Activated CD8-positive, alpha-beta memory T cell treated with anti-CD3 and anti-CD28 coated beads, Interleukin-2, amount 10 ng/mL, durations not matched to agents 7 days and 5 days (primary cell): ENCODE measurements at regions of chr5 and their contacts with region 1.

Region 1: GRCh38 chr5:142769741-142770631 is at the start of gene ARHGAP26:
- DNase-seq: peak; percentile 97
- ATAC-seq: peak; percentile 94
- H3K4me3 Mint-ChIP-seq: peak within 1 kb of the TSS; percentile 89
- H3K27ac Mint-ChIP-seq: peak within 1 kb of the TSS; percentile 88
- H3K4me1 Mint-ChIP-seq: peaks cover 37% of the 10 kb centered on the region
- H3K27me3 Mint-ChIP-seq: no peaks in the 10 kb centered on the region
- total RNA-seq, gene ARHGAP26: 12.6 to 38.9 TPM

Region 2: GRCh38 chr5:142699184-142699720 is 70.7 kb before region 1 on chr5:
- CTCF ChIA-PET with region 1: no interaction called
- DNase-seq: peak; percentile 85
- ATAC-seq: peak; percentile 90
- H3K4me3 Mint-ChIP-seq: no peak overlapping the region
- H3K27ac Mint-ChIP-seq: no peak overlapping the region
- H3K4me1 Mint-ChIP-seq: no peaks in the 10 kb centered on the region
- H3K27me3 Mint-ChIP-seq: peaks cover 18% of the 10 kb centered on the region

Region 3: GRCh38 chr5:142783601-142784341 is 13.8 kb after region 1 on chr5:
- CTCF ChIA-PET with region 1: interaction called, 37 read pairs
- DNase-seq: peak; percentile 92
- ATAC-seq: peak; percentile 87
- H3K4me3 Mint-ChIP-seq: peak overlapping the region; percentile 70
- H3K27ac Mint-ChIP-seq: peak overlapping the region; percentile 86
- H3K4me1 Mint-ChIP-seq: peaks cover 75% of the 10 kb centered on the region
- H3K27me3 Mint-ChIP-seq: no peaks in the 10 kb centered on the region

Region 4: DNA sequence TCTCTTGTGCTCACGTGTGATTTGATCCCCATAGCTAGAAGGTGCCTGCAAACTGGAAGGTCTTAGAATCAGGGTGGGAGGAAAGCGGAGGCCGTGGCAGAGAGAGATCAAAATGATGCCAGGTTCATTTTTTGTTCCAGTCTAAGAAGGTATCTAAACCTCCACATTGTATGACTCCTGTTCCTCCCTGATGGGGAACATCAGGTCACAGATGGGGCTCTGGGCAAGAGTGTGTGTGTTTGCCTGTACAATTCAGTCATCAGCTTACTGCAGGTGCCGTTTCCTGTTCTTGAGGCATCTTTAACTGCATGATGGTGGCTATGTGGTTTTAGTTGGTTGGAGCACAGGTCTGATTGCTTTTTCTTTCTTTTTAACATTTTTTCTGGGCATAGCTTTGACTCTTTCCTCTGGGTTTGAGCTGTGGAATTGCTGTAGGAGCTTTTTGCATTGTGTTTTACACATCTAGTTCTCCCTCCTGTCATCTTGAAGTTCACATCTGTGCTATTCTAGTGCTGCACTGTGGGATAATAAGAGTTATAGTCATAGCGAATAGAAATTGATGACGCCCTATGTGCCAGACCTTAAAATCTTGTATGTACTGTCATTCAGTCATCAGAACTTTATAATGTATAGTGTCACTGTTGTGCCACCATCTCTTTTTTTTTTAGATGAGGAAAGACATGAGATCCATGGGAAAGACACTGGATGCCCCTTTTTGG is 30.9 kb after region 1 on chr5:
- CTCF ChIA-PET with region 1: interaction called, 25 read pairs
- DNase-seq: peak; percentile 81
- ATAC-seq: peak; percentile 85
- H3K4me3 Mint-ChIP-seq: peak overlapping the region; percentile 70
- H3K27ac Mint-ChIP-seq: peak overlapping the region; percentile 95
- H3K4me1 Mint-ChIP-seq: peaks cover 68% of the 10 kb centered on the region
- H3K27me3 Mint-ChIP-seq: no peaks in the 10 kb centered on the region

Region 5: GRCh38 chr5:142821733-142822487 is 51.9 kb after region 1 on chr5:
- CTCF ChIA-PET with region 1: interaction called, 10 read pairs
- DNase-seq: no peak
- ATAC-seq: peak; percentile 87
- H3K4me3 Mint-ChIP-seq: no peak overlapping the region
- H3K27ac Mint-ChIP-seq: peak overlapping the region; percentile 31
- H3K4me1 Mint-ChIP-seq: peaks cover 85% of the 10 kb centered on the region
- H3K27me3 Mint-ChIP-seq: no peaks in the 10 kb centered on the region

Region 6: DNA sequence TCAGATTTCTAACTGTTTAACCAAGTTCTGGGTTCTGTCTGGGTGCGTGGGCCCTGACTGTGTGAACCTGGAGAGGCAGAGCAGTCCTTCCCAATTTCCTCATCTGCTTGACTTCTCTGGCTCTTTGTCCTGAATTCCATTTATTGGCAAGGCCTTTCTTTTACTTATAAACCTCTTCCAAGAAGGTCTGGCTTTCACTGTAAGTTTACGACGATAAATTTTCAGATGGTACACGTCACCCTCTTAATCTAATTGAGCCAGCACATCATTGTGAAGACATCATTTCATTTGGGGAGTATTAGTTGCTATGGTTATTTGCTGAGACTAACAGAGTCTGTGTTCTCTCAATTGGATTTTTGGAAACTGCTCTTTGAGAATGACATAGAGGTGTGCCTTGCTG is 92.6 kb after region 1 on chr5:
- CTCF ChIA-PET with region 1: interaction called, 32 read pairs
- DNase-seq: no peak
- ATAC-seq: no peak
- H3K4me3 Mint-ChIP-seq: no peak overlapping the region
- H3K27ac Mint-ChIP-seq: no peak overlapping the region
- H3K4me1 Mint-ChIP-seq: peaks cover 21% of the 10 kb centered on the region
- H3K27me3 Mint-ChIP-seq: no peaks in the 10 kb centered on the region

Region 7: GRCh38 chr5:142881076-142881783 is 111.2 kb after region 1 on chr5:
- CTCF ChIA-PET with region 1: interaction called, 16 read pairs
- DNase-seq: no peak
- ATAC-seq: peak; percentile 16
- H3K4me3 Mint-ChIP-seq: no peak overlapping the region
- H3K27ac Mint-ChIP-seq: no peak overlapping the region
- H3K4me1 Mint-ChIP-seq: peaks cover 7% of the 10 kb centered on the region
- H3K27me3 Mint-ChIP-seq: no peaks in the 10 kb centered on the region